PC-9 (cell line): ENCODE measurements at regions of chr15 and their contacts with region 1.

Region 1: GRCh38 chr15:89812011-89812835 is 2.4 kb downstream of the ANPEP start:
- DNase-seq: peak; percentile 61 to 74
- H3K4me3 ChIP-seq: peak overlapping the region; percentile 76; the same call in 1 of the 2 replicates
- H3K27ac ChIP-seq: peak overlapping the region; percentile 51
- H3K4me1 ChIP-seq: peaks cover 52% of the 10 kb centered on the region
- H3K27me3 ChIP-seq: no peaks in the 10 kb centered on the region
- CTCF ChIP-seq: no peak

Region 2: GRCh38 chr15:89543389-89543788 is 268.8 kb before region 1 on chr15:
- CTCF ChIA-PET with region 1: no interaction called
- POLR2A ChIA-PET with region 1: no interaction called
- intact Hi-C with region 1: no loop called
- DNase-seq: no peak
- H3K4me3 ChIP-seq: no peak overlapping the region
- H3K27ac ChIP-seq: no peak overlapping the region
- H3K4me1 ChIP-seq: no peaks in the 10 kb centered on the region
- H3K27me3 ChIP-seq: no peaks in the 10 kb centered on the region
- CTCF ChIP-seq: no peak

Region 3: GRCh38 chr15:89732451-89733172 is 79.6 kb before region 1 on chr15:
- CTCF ChIA-PET with region 1: no interaction called
- POLR2A ChIA-PET with region 1: no interaction called
- intact Hi-C with region 1: no loop called
- DNase-seq: no peak
- H3K4me3 ChIP-seq: no peak overlapping the region
- H3K27ac ChIP-seq: no peak overlapping the region
- H3K4me1 ChIP-seq: no peaks in the 10 kb centered on the region
- H3K27me3 ChIP-seq: no peaks in the 10 kb centered on the region
- CTCF ChIP-seq: no peak

Region 4: GRCh38 chr15:89845305-89845893 is 33.2 kb after region 1 on chr15:
- CTCF ChIA-PET with region 1: no interaction called
- POLR2A ChIA-PET with region 1: no interaction called
- intact Hi-C with region 1: loop called (anchors 2 kb)
- DNase-seq: peak; percentile 49 to 87
- H3K4me3 ChIP-seq: no peak overlapping the region
- H3K27ac ChIP-seq: peak overlapping the region; percentile 94
- H3K4me1 ChIP-seq: peaks cover 56% of the 10 kb centered on the region
- H3K27me3 ChIP-seq: no peaks in the 10 kb centered on the region
- CTCF ChIP-seq: no peak